ENCODE measurements at regions of chr12 and their contacts with region 1.

Region 1: DNA sequence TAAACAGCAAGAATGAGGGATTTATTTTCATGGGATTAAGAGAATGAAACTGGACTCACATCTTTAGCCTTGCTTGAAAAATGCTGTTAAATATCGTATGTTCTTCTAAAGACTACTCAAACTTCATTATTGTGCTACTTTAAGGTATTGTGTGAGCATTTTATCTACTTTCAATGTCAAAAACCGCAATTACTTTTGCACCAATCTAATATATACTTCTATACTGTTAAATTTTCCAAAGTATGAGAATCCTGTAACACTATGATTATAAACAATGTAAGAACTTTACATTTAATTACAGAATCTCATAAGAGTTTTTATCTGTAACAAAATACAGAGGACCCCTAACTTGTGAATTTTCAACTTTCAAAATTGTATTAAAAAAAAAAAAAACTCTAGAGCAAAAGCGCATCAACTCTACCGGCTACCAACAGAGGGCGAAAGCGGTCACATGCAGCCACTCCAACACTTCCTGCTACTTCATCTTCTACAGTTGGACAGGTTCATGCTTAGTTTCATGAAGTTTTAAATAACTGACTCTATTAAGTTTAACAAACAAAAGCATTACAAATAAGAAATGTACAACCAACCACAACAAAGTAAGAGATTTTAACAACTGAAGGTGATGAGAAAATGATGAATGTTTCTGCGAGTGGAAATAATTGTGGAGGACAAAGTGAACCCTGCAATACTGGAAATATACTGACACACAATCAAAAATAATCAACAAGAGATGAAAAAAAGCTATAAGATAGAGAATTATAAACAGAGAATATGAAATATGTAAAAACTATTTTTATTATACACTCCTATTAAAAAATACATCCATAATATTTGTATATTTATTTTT is 210.9 kb downstream of the MED13L start:
- DNase-seq: peak in 4 of 5 donors; percentile 27 to 51 (median 34)
- ATAC-seq: no peak
- H3K4me3 ChIP-seq: no peak overlapping the region
- H3K27ac ChIP-seq: no peak overlapping the region
- H3K4me1 ChIP-seq: peaks cover 7 to 66% (median 41%) of the 10 kb centered on the region in 12 donors
- H3K27me3 ChIP-seq: no peaks in the 10 kb centered on the region
- CTCF ChIP-seq: peak; percentile 33 to 70 (median 54)
- POLR2A ChIP-seq: no peak

Region 2: GRCh38 chr12:115736360-115736759 is 330.2 kb before region 1 on chr12:
- intact Hi-C with region 1: no loop called
- DNase-seq: no peak
- ATAC-seq: no peak
- H3K4me3 ChIP-seq: no peak overlapping the region
- H3K27ac ChIP-seq: no peak overlapping the region
- H3K4me1 ChIP-seq: no peaks in the 10 kb centered on the region
- H3K27me3 ChIP-seq: peaks cover 0 to 15% (median 0%) of the 10 kb centered on the region in 9 donors
- CTCF ChIP-seq: no peak
- POLR2A ChIP-seq: no peak

Region 3: GRCh38 chr12:115817389-115817788 is 249.2 kb before region 1 on chr12:
- intact Hi-C with region 1: no loop called
- DNase-seq: no peak
- ATAC-seq: no peak
- H3K4me3 ChIP-seq: no peak overlapping the region
- H3K27ac ChIP-seq: no peak overlapping the region
- H3K4me1 ChIP-seq: no peaks in the 10 kb centered on the region
- H3K27me3 ChIP-seq: peaks cover 0 to 6% (median 0%) of the 10 kb centered on the region in 9 donors
- CTCF ChIP-seq: no peak
- POLR2A ChIP-seq: no peak

Region 4: GRCh38 chr12:115983226-115983798 is 83.3 kb before region 1 on chr12:
- intact Hi-C with region 1: no loop called
- DNase-seq: no peak
- ATAC-seq: no peak
- H3K4me3 ChIP-seq: no peak overlapping the region
- H3K27ac ChIP-seq: no peak overlapping the region
- H3K4me1 ChIP-seq: peaks cover 0 to 25% (median 6%) of the 10 kb centered on the region in 12 donors
- H3K27me3 ChIP-seq: no peaks in the 10 kb centered on the region
- CTCF ChIP-seq: peak in 7 of 12 donors; percentile 9 to 31 (median 20)
- POLR2A ChIP-seq: no peak

Region 5: DNA sequence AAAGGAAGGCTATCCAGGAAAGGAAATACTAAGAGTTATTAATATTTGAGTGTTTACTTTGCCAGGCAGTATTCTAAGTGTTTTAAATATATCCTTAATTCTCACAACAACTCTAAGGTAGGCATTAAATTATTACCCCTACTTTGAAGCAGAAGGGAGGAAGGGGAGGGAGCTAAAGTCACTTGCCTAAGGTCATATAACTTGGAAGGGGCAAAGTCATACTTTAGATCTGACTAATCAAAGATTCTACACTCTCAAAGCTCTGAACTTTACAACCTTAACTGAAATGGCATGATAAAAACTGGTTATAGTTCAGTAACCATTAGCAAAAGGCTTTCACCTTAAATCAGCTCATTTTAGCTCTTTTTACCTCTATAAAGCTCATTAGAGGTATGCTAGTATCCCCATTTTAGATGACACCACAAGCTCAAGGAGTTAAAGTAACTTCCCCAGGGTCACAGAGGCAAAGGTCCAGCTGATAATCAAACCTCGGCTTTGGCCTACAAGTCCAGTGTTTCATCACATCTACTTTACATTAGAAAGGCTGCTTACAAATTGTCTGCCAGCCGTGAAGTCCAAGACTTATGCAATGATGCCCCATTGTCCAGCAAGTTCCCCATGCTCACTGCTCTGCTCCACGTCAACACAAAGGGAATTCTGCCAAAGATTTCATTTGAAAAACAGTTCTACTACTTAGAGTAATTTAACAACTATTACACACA is 13.0 kb before region 1 on chr12:
- intact Hi-C with region 1: loop called in 1 of 10 experiments (anchors 2 kb)
- DNase-seq: peak in 2 of 5 donors; percentile 33 to 35
- ATAC-seq: peak in 3 of 4 donors; percentile 62 to 87 (median 78)
- H3K4me3 ChIP-seq: no peak overlapping the region
- H3K27ac ChIP-seq: peak overlapping the region in 6 of 12 donors; percentile 10 to 53 (median 22)
- H3K4me1 ChIP-seq: peaks cover 9 to 72% (median 52%) of the 10 kb centered on the region in 12 donors
- H3K27me3 ChIP-seq: no peaks in the 10 kb centered on the region
- CTCF ChIP-seq: no peak
- POLR2A ChIP-seq: no peak

Region 6: DNA sequence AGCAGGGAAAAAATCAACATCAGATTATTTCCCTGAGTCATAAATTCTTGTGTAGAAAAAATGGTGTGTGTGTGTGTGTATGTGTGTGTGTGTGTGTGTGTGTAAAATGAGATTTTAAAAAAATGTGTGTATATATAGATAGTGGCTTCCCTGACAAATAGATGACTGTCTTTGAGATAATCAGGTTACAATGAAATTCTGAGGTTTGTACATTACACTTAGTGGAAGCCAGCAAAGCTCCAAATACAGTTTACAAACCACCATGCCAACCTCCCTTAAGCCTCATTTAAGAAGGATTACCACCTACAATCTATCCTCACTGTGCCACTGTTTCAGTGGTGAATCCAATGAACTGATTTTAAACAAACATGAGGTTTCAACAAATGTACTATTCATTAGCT is 117.1 kb after region 1 on chr12:
- intact Hi-C with region 1: no loop called
- DNase-seq: no peak
- ATAC-seq: no peak
- H3K4me3 ChIP-seq: no peak overlapping the region
- H3K27ac ChIP-seq: no peak overlapping the region
- H3K4me1 ChIP-seq: peaks cover 0 to 82% (median 50%) of the 10 kb centered on the region in 12 donors
- H3K27me3 ChIP-seq: no peaks in the 10 kb centered on the region
- CTCF ChIP-seq: no peak
- POLR2A ChIP-seq: no peak